ENCODE measurements at regions of chr10 and their contacts with region 1.

Region 1: GRCh38 chr10:15433850-15434537 is 62.9 kb upstream of the FAM171A1 start:
- DNase-seq: peak; percentile 69
- H3K4me3 Mint-ChIP-seq: peak overlapping the region; percentile 71
- H3K27ac Mint-ChIP-seq: peak overlapping the region; percentile 61
- H3K4me1 Mint-ChIP-seq: peaks cover 7% of the 10 kb centered on the region
- H3K27me3 Mint-ChIP-seq: peaks cover 33% of the 10 kb centered on the region
- CTCF ChIP-seq: peak; percentile 64

Region 2: DNA sequence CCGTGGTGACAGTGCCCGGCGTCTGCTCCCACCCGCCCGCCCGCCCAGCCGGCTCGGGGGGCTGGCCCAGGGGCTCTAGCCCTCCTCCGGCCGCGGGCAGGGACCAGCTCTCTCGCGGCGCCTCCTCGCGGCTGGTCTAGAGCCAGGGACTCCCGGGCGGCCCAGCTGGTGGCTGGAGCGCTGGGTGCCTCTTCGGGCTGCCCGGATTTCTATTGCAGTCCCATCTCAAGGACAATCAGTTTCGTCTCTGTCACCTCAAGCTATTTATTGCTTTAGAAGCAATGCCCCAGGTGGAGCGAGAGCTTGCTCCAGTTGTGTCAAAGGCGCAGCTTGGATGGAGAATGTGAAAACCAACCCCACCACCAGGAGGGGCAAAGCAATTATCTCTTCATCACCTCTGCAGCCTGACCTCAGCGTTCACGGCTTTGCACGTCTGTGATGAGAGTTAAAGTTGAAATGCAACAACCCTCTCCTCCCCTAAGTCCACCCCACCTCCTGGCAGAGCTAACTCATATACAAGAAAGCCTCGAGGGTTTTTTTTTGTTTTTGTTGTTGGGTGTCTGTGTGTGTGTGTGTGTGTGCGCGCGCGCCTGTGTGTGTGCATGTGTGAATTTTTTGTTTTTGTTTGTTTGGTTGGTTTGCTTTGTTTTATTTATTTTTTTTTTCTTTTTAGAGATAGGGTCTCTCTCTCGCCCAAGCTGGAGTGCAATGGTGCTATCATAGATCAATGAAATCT is 286.1 kb after region 1 on chr10 and contains the start of gene ITGA8:
- CTCF ChIA-PET with region 1: interaction called, 16 read pairs
- POLR2A ChIA-PET with region 1: no interaction called
- intact Hi-C with region 1: loop called (anchors 1 kb)
- DNase-seq: no peak
- H3K4me3 Mint-ChIP-seq: no peak within 1 kb of the TSS
- H3K27ac Mint-ChIP-seq: no peak within 1 kb of the TSS
- H3K4me1 Mint-ChIP-seq: no peaks in the 10 kb centered on the region
- H3K27me3 Mint-ChIP-seq: peaks cover 77% of the 10 kb centered on the region
- CTCF ChIP-seq: no peak
- total RNA-seq, gene ITGA8: not detected in 2 replicates

Measured in MCF 10A (cell line).